K562 (cell line): ENCODE measurements at regions of chr17 and their contacts with region 1.

Region 1: GRCh38 chr17:57130761-57131461 is 45.9 kb downstream of the AKAP1 start:
- DNase-seq: peak; percentile 88 to 91 (median 90)
- ATAC-seq: peak; percentile 98
- H3K4me3 ChIP-seq: no peak overlapping the region
- H3K27ac ChIP-seq: no peak overlapping the region
- H3K4me1 ChIP-seq: peaks cover 0 to 4% of the 10 kb centered on the region in 2 experiments; a peak in 1 of 5 replicates
- H3K27me3 ChIP-seq: peaks cover 18 to 20% of the 10 kb centered on the region in 2 experiments
- CTCF ChIP-seq: peak; percentile 63 to 85 (median 81)
- EP300 ChIP-seq: no peak
- POLR2A ChIP-seq: no peak
- RAD21 ChIP-seq: peak; percentile 60 to 77

Region 2: DNA sequence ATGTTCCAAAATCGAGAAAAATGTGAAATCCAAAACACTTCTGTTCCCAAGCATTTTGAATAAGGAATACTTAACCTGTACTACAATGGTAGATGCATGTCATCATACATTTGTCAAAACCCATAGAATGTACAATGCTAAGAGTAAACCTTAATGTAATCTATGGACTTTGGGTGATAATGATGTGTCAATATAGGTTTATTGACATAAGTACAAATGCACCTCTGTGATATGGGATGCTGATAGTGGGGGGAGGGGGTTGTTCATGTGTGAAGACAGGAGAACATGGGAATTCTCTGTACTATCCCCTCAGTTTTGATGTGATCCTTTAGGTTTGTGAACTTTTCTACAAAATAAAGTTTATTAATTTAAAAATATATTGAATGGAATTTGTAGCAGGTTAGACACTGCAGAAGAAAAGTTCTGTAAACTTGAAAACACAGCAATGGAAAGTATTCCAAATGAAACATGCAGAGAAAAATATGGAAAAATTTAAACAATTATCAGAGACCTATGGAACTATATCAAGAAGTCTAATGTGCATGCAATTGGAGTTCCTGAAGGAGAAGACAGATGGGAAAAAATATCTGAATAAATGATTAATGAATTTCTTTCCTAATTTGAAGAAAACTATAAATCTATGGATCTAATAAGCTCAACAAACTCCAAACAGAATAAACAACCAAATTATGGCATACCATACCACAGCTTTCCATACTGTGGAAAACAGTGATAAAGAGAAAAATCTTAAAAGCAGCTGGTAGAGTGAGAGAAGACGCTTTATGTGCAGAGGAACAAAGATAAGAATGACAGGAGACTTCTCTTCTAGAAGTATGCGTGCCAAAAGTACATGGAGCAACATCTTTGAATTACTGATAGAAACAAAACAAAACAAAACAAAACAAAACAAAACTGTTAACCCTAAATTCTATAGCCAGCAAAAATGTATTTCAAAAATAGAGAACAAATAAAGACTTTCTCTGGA is 90.7 kb after region 1 on chr17:
- CTCF ChIA-PET with region 1: no interaction called
- POLR2A ChIA-PET with region 1: no interaction called
- in situ Hi-C with region 1: no loop called
- intact Hi-C with region 1: no loop called
- DNase-seq: no peak
- ATAC-seq: no peak
- H3K4me3 ChIP-seq: no peak overlapping the region
- H3K27ac ChIP-seq: no peak overlapping the region
- H3K4me1 ChIP-seq: no peaks in the 10 kb centered on the region
- H3K27me3 ChIP-seq: no peaks in the 10 kb centered on the region
- CTCF ChIP-seq: no peak
- EP300 ChIP-seq: no peak
- POLR2A ChIP-seq: no peak
- RAD21 ChIP-seq: no peak

Region 3: GRCh38 chr17:57739402-57740392 is 608.8 kb after region 1 on chr17:
- CTCF ChIA-PET with region 1: interaction called, 12 read pairs
- POLR2A ChIA-PET with region 1: no interaction called
- in situ Hi-C with region 1: no loop called
- intact Hi-C with region 1: loop called (anchors 5 kb)
- DNase-seq: peak; percentile 36 to 53 (median 40)
- ATAC-seq: peak; percentile 93
- H3K4me3 ChIP-seq: no peak overlapping the region
- H3K27ac ChIP-seq: no peak overlapping the region
- H3K4me1 ChIP-seq: no peaks in the 10 kb centered on the region
- H3K27me3 ChIP-seq: peaks cover 26 to 40% of the 10 kb centered on the region in 2 experiments
- CTCF ChIP-seq: peak; percentile 60 to 61 (median 60)
- EP300 ChIP-seq: no peak
- POLR2A ChIP-seq: no peak
- RAD21 ChIP-seq: peak; percentile 36 to 60